ENCODE measurements at regions of chr7 and their contacts with region 1.

Region 1: DNA sequence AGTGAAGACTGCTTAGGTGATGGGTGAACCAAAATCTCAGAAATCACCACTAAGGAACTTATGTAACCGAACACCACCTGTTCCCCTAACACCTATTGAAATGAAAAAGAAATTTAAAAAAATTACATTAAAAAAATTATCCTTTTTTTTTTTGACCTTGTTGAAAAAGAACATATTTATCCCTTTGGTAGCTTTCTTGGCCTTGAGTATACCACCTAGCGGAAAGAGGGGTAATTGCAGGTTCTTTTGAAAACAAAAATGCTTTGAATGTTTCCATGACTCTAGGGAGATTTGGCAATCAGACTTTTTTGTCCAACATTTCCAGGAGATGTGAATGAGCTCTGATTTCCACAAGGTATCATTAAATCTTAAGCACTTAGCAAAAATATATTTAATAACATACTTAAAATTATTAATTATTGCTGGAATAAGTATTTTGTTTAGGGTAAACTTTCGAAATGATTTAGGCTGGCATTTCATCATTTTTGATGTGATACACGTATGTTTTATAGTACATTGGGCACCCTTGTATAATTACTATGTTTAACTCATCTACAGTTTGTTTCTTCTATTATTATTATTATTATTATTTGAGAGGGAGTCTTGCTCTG is 47.0 kb upstream of the ELMO1 start:
- DNase-seq: peak; percentile 12
- ATAC-seq: no peak
- H3K4me3 ChIP-seq: no peak overlapping the region
- H3K27ac ChIP-seq: no peak overlapping the region
- H3K4me1 ChIP-seq: no peaks in the 10 kb centered on the region
- H3K27me3 ChIP-seq: peaks cover 2% of the 10 kb centered on the region; the same call in 1 of the 2 replicates
- CTCF ChIP-seq: peak; percentile 85

Region 2: GRCh38 chr7:37081436-37081835 is 414.2 kb before region 1 on chr7:
- CTCF ChIA-PET with region 1: no interaction called
- POLR2A ChIA-PET with region 1: no interaction called
- in situ Hi-C with region 1: no loop called
- intact Hi-C with region 1: no loop called
- DNase-seq: no peak
- ATAC-seq: no peak
- H3K4me3 ChIP-seq: no peak overlapping the region
- H3K27ac ChIP-seq: no peak overlapping the region
- H3K4me1 ChIP-seq: no peaks in the 10 kb centered on the region
- H3K27me3 ChIP-seq: no peaks in the 10 kb centered on the region
- CTCF ChIP-seq: no peak

Region 3: GRCh38 chr7:37284805-37285231 is 210.9 kb before region 1 on chr7:
- CTCF ChIA-PET with region 1: no interaction called
- POLR2A ChIA-PET with region 1: no interaction called
- in situ Hi-C with region 1: no loop called
- intact Hi-C with region 1: loop called (anchors 10 kb)
- DNase-seq: peak; percentile 35
- ATAC-seq: no peak; the same call in 1 of the 2 replicates
- H3K4me3 ChIP-seq: no peak overlapping the region
- H3K27ac ChIP-seq: no peak overlapping the region
- H3K4me1 ChIP-seq: no peaks in the 10 kb centered on the region
- H3K27me3 ChIP-seq: no peaks in the 10 kb centered on the region; the same call in 1 of the 2 replicates
- CTCF ChIP-seq: peak; percentile 92

Measured in Panc1 (cell line).